Mammary epithelial cell (primary cell): ENCODE measurements at regions of chr5 and their contacts with region 1.

Region 1: DNA sequence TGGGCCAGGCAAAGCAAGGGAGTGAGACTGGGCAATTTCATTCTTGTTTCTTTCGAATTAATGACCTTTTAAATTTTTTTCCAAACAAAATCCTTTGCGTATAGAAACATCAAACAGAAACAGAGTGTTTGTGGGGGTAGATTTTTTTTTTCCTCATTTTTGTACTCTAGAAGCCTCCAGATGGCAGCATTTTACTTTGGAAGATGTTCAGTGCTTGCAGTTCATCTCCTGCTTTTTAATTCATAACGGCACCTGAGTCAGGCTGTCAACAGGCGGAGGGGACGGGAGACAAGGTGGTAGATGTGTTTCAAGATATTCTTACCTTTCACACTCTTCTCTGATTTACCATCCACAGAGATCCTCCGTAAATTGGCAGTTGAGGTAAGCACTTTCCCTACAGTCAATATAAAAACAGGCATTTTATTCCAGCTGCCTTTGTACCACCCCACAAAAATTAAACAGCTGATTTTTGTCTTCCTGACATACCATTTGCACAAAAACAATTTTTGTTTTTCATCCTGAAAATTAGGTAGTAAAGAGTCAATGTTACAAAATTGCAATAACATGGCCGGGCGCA is 99.5 kb upstream of the FBXL17 start:
- DNase-seq: peak; percentile 16
- H3K4me3 ChIP-seq: no peak overlapping the region
- H3K27ac ChIP-seq: no peak overlapping the region
- H3K4me1 ChIP-seq: no peaks in the 10 kb centered on the region
- H3K27me3 ChIP-seq: peaks cover 3% of the 10 kb centered on the region
- CTCF ChIP-seq: peak; percentile 14 to 48

Region 2: GRCh38 chr5:108620516-108620915 is 139.1 kb after region 1 on chr5:
- CTCF ChIA-PET with region 1: no interaction called
- dilution Hi-C with region 1: no loop called
- in situ Hi-C with region 1: no loop called
- intact Hi-C with region 1: loop called (anchors 5 kb)
- DNase-seq: no peak
- H3K4me3 ChIP-seq: no peak overlapping the region
- H3K27ac ChIP-seq: no peak overlapping the region
- H3K4me1 ChIP-seq: no peaks in the 10 kb centered on the region
- H3K27me3 ChIP-seq: peaks cover 3% of the 10 kb centered on the region
- CTCF ChIP-seq: no peak